ENCODE measurements at regions of chr2 and their contacts with region 1.

Region 1: GRCh38 chr2:173027181-173028128 is 48.2 kb upstream of the MAP3K20 start:
- DNase-seq: peak; percentile 77 to 84
- ATAC-seq: peak; percentile 71 to 78
- H3K4me3 ChIP-seq: peak overlapping the region in 3 of 4 donors; percentile 14 to 27 (median 18)
- H3K27ac ChIP-seq: peak overlapping the region; percentile 86 to 94 (median 90)
- H3K4me1 ChIP-seq: peaks cover 56 to 57% of the 10 kb centered on the region in 2 donors
- H3K27me3 ChIP-seq: no peaks in the 10 kb centered on the region
- CTCF ChIP-seq: peak; percentile 94 to 98 (median 95)
- POLR2A ChIP-seq: peak; percentile 18 to 87

Region 2: GRCh38 chr2:172977270-172978062 is 50.0 kb before region 1 on chr2:
- in situ Hi-C with region 1: loop called in 2 of 4 experiments (anchors 5 kb)
- intact Hi-C with region 1: loop called (anchors 2 kb)
- DNase-seq: peak in 1 of 2 donors; percentile 36
- ATAC-seq: peak; percentile 81 to 84
- H3K4me3 ChIP-seq: no peak overlapping the region
- H3K27ac ChIP-seq: no peak overlapping the region
- H3K4me1 ChIP-seq: peaks cover 0 to 7% of the 10 kb centered on the region in 2 donors
- H3K27me3 ChIP-seq: no peaks in the 10 kb centered on the region
- CTCF ChIP-seq: peak; percentile 26 to 62 (median 55)
- POLR2A ChIP-seq: no peak

Region 3: GRCh38 chr2:173075781-173076580 is 48.5 kb after region 1 on chr2 and contains the start of gene MAP3K20:
- in situ Hi-C with region 1: no loop called
- intact Hi-C with region 1: loop called (anchors 2 kb)
- DNase-seq: peak; percentile 75 to 82
- ATAC-seq: peak; percentile 75 to 78
- H3K4me3 ChIP-seq: peak within 1 kb of the TSS; percentile 59 to 83 (median 80)
- H3K27ac ChIP-seq: peak within 1 kb of the TSS; percentile 88 to 98 (median 96)
- H3K4me1 ChIP-seq: peaks cover 54 to 67% of the 10 kb centered on the region in 2 donors
- H3K27me3 ChIP-seq: no peaks in the 10 kb centered on the region
- CTCF ChIP-seq: peak; percentile 31 to 72 (median 63)
- POLR2A ChIP-seq: peak; percentile 84 to 95
- total RNA-seq, gene MAP3K20: 225 to 517 (median 280) TPM

Region 4: GRCh38 chr2:173354601-173355131 is 327.2 kb after region 1 on chr2 and contains the start of gene CDCA7:
- in situ Hi-C with region 1: loop called in 1 of 4 experiments (anchors 5 kb)
- intact Hi-C with region 1: loop called (anchors 1 kb)
- DNase-seq: peak; percentile 19 to 40
- ATAC-seq: peak; percentile 75 to 79
- H3K4me3 ChIP-seq: peak within 1 kb of the TSS; percentile 60 to 84 (median 70)
- H3K27ac ChIP-seq: peak within 1 kb of the TSS; percentile 69 to 81 (median 74)
- H3K4me1 ChIP-seq: peaks cover 8 to 17% of the 10 kb centered on the region in 2 donors
- H3K27me3 ChIP-seq: peaks cover 0 to 18% (median 13%) of the 10 kb centered on the region in 3 donors
- CTCF ChIP-seq: peak in 1 of 5 experiments; percentile 13
- POLR2A ChIP-seq: no peak
- total RNA-seq, gene CDCA7: 1.1 to 3.3 (median 1.4) TPM in 3 of 4 donors, not detected in the other

Region 5: DNA sequence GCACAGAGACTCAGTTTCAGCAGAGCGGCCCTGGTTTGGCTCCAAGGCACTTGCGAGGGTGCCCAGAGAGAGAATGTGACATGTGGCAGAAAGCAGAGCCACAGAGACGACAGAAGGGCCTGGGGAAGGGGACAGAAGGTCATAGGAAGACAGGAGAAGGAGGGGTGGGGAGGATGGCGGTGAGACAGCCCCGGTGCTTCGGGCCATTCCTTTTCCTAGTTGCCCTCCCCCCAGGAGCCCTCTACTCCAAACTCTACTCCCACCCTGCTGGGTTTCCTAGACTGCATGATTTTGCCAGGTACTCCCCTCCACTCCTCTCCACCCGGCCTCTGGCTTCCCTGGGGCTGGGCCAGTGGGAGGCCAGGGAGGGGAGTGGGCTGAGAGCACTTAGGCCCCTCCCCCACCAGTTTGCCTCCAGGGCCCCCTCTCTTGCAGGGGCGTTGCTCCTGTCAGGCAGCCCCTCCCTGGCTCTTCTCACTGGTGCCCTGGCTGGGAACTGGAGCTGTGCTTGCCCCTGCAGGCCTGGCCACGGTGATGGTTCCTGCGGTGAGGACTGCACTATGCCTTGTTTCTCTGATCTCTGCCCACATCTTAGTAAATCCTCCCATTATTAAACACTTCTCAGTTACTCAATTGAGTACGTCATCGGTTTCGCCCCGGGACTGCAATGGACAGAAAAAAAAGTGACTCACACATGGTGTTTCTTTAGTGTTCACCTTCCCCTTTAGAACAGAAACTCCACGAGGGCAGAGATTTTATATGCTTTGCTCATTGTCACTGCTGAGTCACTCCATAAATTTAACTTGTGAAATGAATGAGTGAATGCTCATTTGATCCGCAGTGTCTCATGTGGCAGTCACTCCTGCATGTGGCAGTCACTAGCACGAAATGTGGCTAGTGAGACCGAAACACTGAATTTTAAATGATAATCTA is 996.4 kb after region 1 on chr2:
- in situ Hi-C with region 1: loop called in 1 of 4 experiments (anchors 25 kb)
- intact Hi-C with region 1: no loop called
- DNase-seq: peak; percentile 81 to 88
- ATAC-seq: peak; percentile 86 to 87
- H3K4me3 ChIP-seq: peak overlapping the region in 3 of 4 donors; percentile 32 to 52 (median 45)
- H3K27ac ChIP-seq: peak overlapping the region; percentile 95 to 99 (median 96)
- H3K4me1 ChIP-seq: peaks cover 23 to 42% of the 10 kb centered on the region in 2 donors
- H3K27me3 ChIP-seq: no peaks in the 10 kb centered on the region
- CTCF ChIP-seq: peak in 1 of 5 experiments; percentile 31
- POLR2A ChIP-seq: peak; percentile 62 to 84

Measured in gastrocnemius medialis (tissue), 4 donors.